Calu3 (cell line): ENCODE measurements at regions of chr1 and their contacts with region 1.

Region 1: DNA sequence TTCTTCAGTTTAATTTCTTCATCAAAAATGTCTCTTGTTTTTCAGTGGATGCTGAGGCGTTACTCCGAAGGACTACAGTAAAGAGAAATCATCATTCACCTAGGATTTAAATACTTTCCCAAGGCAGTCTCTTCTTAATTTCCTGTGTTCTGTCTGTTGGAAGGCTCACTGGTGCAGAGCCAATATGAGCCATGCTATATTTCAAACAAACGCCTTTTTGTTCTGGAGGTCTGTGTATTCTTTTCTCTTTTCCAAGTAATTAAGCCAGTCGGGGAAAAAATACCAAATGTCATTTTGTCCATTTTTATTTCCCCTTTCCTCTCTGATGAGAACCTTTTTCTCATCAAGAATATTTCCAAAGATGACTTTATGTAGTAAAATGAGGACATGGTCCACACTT is 206.5 kb downstream of the RWDD3 start:
- DNase-seq: no peak
- H3K4me3 Mint-ChIP-seq: no peak overlapping the region
- H3K27ac Mint-ChIP-seq: no peak overlapping the region
- H3K4me1 Mint-ChIP-seq: no peaks in the 10 kb centered on the region
- H3K27me3 Mint-ChIP-seq: no peaks in the 10 kb centered on the region
- CTCF ChIP-seq: no peak

Region 2: DNA sequence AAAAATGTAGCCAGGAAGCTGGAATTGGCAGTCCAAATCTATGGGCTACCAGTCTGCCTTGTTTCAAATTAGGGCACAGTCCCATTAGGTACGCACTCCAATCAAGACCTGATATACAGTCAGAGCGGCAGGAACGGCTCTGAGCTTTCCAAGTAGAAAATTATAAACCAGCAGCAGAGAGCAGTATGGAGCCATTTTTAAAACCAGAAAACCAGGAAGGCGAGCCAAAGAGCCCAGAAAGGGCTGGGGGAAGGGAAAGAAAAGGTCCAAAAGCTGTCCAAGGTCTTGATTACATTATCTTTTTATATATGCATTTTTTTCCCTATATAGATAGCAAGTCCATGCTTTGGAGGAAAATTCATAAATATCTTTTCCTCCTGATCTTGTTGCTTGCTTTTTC is 512.5 kb after region 1 on chr1:
- CTCF ChIA-PET with region 1: no interaction called
- intact Hi-C with region 1: loop called (anchors 10 kb)
- DNase-seq: peak; percentile 46
- H3K4me3 Mint-ChIP-seq: no peak overlapping the region
- H3K27ac Mint-ChIP-seq: no peak overlapping the region
- H3K4me1 Mint-ChIP-seq: peaks cover 23% of the 10 kb centered on the region
- H3K27me3 Mint-ChIP-seq: no peaks in the 10 kb centered on the region
- CTCF ChIP-seq: no peak